ENCODE measurements at regions of chr15 and their contacts with region 1.

Region 1: DNA sequence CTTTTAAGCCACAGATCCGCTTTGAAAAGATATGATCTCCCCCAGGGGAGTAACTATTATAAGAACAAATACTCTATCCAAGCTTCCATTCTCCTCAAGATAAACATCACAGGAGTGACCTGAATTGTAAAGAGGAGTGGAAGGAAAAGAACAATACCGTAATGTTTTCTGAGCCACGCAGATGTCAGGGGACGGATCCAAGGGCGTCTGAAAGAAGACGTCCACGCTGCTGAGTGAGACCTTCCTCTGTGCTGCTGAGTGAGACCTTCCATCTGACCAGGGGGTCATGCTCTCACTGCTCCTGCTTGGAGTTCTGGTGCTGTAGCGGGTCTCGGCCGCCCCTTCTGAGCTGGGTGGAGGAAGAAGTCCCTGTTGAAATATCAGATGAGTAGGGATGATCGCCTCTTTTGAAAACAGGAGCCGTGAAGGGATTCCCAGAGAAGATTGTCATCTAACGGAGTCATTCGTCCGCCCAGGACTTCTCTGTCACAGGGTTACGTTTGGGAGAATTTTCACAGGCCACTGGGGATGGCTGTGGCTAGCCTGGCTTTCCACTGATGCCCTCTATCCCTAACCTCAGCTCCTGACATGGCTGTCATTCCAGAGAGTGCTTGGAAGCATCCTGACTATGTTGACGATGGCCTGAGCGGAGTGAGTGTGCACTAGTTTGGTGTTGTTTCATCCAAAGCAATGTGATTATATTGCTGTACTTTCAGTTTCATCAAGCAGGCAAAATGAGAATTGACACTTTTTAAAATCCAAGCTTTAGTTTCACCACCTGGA is 184.9 kb downstream of the APBA2 start:
- DNase-seq: no peak

Region 2: DNA sequence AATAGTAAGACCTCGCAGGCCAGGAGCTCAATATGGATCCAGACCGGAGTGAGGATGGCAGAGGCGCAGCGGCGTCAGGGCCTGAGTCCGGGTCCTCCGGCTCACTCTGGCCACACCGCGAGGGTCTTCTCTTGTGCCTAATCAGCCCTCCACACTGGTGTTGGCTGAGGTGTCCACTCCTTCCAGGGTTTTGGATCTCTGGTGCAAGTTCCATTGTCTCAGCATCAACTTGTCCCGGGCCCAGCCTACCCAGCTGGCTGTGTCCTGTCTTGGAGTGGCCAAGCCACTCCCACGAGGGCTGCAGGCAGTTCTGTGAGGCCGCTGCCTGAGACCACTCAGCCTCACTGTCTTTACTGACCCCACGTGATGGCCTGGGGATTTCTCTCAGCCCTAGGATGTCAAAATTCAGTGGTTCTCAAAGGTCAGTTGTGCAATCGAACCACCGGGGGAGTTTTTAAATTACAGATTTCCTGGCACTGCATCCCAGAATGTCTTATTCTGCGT is 209.6 kb before region 1 on chr15:
- in situ Hi-C with region 1: no loop called
- DNase-seq: no peak

Region 3: DNA sequence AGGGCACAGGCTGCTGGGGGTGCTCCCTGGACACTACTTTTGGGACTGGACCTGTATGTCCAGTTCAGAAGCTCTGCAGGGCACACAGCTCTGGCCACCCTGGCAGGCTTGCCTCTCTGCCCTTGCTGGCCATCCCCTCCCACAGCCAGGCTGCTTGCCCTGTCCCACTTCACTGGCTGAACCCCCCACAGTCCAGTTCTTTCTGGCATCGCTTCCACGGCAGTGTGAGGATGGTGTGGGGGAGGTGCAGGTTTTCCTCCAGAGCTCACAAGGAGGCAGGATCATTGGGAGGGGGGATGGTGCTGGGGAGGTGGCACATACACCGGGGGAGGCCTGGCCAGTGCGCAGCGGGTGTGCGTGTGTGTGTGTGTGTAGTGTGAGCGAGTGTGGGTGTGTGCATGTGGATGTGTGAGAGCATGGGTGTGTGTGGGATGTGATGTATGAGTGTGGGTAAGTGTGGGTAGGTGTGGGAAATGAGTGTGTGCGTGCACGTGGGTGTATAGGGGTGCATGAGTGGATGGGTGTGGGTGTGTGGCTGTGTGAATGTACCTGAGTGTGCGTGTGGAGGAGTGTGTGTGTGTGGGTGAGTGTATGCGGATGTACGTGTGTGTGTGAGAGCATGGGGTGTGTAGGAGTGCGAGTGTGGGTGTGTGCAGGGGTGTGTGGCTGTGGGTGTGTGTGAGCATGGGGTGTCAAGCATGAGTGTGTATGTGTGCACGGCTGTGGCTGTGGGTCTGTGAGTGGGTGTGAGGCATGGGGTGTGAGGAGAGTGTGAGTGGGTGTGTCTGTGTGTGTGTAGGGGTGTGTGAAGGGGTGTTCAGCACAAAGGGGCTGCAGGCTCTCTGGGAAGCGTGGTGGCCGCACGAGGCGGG is 43.8 kb after region 1 on chr15:
- in situ Hi-C with region 1: no loop called
- DNase-seq: no peak

Region 4: DNA sequence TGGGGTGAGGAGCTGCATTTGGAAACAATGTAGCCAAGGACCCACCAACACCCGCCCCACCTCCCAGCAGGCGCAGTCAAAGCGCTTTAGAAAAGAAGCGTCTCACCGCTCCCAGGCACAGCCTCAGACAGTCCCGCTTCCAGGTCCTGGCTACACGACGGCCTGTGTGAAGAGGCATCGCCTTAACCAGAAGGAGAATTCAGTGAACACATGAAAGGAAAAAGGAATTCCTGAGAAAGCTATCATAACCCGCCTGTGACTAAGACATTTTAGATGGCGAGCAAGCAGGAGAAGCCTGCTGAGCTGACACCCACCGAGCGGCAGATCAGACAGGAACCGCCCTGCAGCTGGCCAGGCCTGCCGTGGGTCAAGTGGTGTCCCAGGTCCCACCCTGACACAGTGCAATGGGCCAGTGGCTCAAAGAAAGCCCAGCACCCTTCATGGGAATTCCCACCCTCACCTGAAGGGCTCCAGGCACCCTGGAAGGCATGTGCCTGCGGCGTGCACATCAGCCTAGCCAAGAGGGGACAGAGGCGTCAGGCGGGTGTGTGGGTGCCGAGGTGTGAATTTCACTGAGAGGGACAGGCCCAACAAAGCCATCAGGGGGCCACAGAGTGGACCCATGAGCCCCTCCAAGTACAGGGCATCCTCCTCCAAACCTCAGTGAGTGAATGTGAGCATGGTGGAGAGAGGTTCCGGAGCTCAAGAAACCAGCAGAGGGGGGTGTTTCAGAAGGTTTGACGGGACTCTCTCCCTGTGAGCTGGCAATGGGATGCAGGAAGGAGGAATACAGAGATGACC is 54.1 kb after region 1 on chr15:
- in situ Hi-C with region 1: loop called (anchors 10 kb)
- DNase-seq: no peak

Measured in KBM-7 (cell line).